ENCODE measurements at regions of chr9 and their contacts with region 1.

Region 1: DNA sequence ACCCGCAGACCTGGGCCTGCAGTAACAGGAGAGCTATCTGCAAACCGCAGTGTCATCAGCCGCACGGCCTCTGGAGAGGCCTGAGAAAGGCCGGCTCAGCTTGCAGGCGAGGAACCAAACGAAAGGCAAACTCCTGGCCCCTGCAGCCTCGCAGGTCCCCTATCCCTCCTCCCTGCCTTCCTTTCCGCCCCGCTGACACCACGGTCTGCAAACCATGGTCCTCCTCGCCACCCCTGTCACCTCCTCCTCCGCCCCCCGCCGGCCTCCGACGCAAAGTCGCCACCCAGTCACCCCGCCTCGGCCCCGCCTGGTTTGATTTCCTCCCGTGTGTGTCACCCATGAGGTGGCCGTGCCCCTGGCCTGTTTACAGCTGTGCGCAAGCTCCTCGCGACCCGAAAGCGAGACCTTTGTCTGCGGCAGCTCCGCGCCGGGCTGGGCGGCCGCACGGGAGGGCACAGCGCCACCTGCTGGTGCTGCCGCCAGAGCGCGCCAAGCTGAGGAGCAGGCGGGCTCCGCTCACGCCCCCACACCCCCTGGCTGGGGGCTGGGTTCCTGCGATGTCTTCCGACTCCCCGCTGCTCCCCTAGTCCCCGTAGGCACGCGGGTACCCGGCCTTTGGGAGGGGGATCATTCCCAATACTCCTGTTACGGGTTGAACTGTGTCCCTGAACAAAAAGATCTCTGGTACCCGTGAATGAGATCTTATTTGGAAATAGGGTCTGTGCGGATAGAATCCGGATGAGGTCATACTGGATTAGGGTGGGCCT is 19.4 kb downstream of the GBGT1 start:
- DNase-seq: peak; percentile 94
- ATAC-seq: peak; percentile 65
- H3K4me3 ChIP-seq: peak overlapping the region in 4 of 5 experiments; percentile 28 to 43 (median 38)
- H3K4me3 Mint-ChIP-seq: peak overlapping the region; percentile 84
- H3K27ac ChIP-seq: peak overlapping the region; percentile 64 to 67
- H3K27ac Mint-ChIP-seq: peak overlapping the region; percentile 86
- H3K4me1 ChIP-seq: peaks cover 29 to 56% of the 10 kb centered on the region in 2 donors
- H3K4me1 Mint-ChIP-seq: peaks cover 64% of the 10 kb centered on the region
- H3K27me3 ChIP-seq: no peaks in the 10 kb centered on the region
- H3K27me3 Mint-ChIP-seq: no peaks in the 10 kb centered on the region
- CTCF ChIP-seq: peak; percentile 98

Region 2: DNA sequence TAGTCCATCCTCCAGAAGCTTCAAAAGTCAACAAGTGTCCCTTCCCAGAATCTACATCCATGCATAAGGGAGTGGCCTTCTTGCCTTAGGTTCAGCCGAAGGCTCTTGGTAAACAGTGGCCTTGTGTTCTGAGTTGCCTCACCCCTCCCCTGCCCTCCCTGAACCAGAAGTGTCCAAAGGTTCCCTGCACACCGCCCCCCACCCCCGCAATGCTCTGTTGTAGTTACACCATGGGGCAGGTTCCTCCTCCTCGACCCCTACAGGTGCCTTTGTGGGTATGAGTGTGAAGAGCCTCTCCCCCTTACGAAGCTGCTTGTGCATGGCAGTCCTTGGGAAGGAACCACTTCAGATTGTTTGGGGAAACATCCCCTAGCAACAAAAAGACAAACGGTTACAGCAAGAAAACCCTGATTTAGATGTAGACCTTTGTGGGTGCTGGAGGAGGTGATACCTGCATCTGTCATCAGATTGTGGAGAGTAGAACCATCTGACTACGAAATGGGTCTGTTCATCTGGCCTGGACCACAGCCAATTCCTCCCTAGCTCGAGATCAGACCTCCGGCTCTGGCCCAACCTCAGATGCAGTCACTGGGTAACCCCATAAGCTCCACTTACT is 258.5 kb before region 1 on chr9:
- CTCF ChIA-PET with region 1: no interaction called
- POLR2A ChIA-PET with region 1: no interaction called
- intact Hi-C with region 1: loop called (anchors 2 kb)
- DNase-seq: peak; percentile 61
- ATAC-seq: no peak
- H3K4me3 ChIP-seq: no peak overlapping the region
- H3K4me3 Mint-ChIP-seq: no peak overlapping the region
- H3K27ac ChIP-seq: peak overlapping the region in 1 of 2 donors; percentile 45
- H3K27ac Mint-ChIP-seq: peak overlapping the region; percentile 80
- H3K4me1 ChIP-seq: peaks cover 42 to 50% of the 10 kb centered on the region in 2 donors
- H3K4me1 Mint-ChIP-seq: peaks cover 45% of the 10 kb centered on the region
- H3K27me3 ChIP-seq: no peaks in the 10 kb centered on the region
- H3K27me3 Mint-ChIP-seq: no peaks in the 10 kb centered on the region
- CTCF ChIP-seq: no peak

Region 3: DNA sequence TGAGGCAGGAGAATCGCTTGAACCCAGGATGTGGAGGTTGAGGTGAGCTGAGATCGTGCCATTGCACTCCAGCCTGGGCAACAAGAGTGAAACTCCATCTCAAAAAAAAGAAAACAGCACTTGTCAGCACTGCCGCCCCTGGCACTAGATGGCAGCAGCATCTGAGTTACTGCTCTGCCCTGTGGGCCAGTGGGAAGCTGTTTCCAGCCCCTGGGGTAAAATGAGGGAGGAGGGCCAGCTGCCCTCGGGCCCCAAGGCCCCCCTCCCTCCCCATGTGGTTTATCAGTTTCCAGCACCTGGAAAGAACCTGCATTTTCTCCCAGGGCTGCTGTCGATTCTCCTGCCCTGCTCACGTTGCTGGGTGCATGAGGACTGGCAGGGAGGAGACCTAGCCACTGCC is 95.8 kb before region 1 on chr9:
- CTCF ChIA-PET with region 1: interaction called, 6 read pairs
- POLR2A ChIA-PET with region 1: no interaction called
- intact Hi-C with region 1: loop called (anchors 1 kb)
- DNase-seq: no peak
- ATAC-seq: no peak
- H3K4me3 ChIP-seq: no peak overlapping the region
- H3K4me3 Mint-ChIP-seq: no peak overlapping the region
- H3K27ac ChIP-seq: no peak overlapping the region
- H3K27ac Mint-ChIP-seq: no peak overlapping the region
- H3K4me1 ChIP-seq: no peaks in the 10 kb centered on the region
- H3K4me1 Mint-ChIP-seq: no peaks in the 10 kb centered on the region
- H3K27me3 ChIP-seq: no peaks in the 10 kb centered on the region
- H3K27me3 Mint-ChIP-seq: no peaks in the 10 kb centered on the region
- CTCF ChIP-seq: no peak

Region 4: GRCh38 chr9:133115448-133116345 is 28.6 kb before region 1 on chr9:
- CTCF ChIA-PET with region 1: interaction called, 599 read pairs
- POLR2A ChIA-PET with region 1: interaction called, 21 read pairs
- intact Hi-C with region 1: loop called (anchors 1 kb)
- DNase-seq: peak; percentile 66
- ATAC-seq: peak; percentile 56
- H3K4me3 ChIP-seq: no peak overlapping the region
- H3K4me3 Mint-ChIP-seq: peak overlapping the region; percentile 67
- H3K27ac ChIP-seq: peak overlapping the region in 1 of 2 donors; percentile 57
- H3K27ac Mint-ChIP-seq: peak overlapping the region; percentile 85
- H3K4me1 ChIP-seq: peaks cover 55 to 68% of the 10 kb centered on the region in 2 donors
- H3K4me1 Mint-ChIP-seq: peaks cover 68% of the 10 kb centered on the region
- H3K27me3 ChIP-seq: no peaks in the 10 kb centered on the region
- H3K27me3 Mint-ChIP-seq: no peaks in the 10 kb centered on the region
- CTCF ChIP-seq: no peak

Region 5: GRCh38 chr9:133133681-133134418 is 10.5 kb before region 1 on chr9:
- CTCF ChIA-PET with region 1: interaction called, 87 read pairs
- POLR2A ChIA-PET with region 1: interaction called, 22 read pairs
- intact Hi-C with region 1: loop called (anchors 1 kb)
- DNase-seq: peak; percentile 87
- ATAC-seq: peak; percentile 82
- H3K4me3 ChIP-seq: no peak overlapping the region
- H3K4me3 Mint-ChIP-seq: peak overlapping the region; percentile 80
- H3K27ac ChIP-seq: peak overlapping the region; percentile 92 to 95
- H3K27ac Mint-ChIP-seq: peak overlapping the region; percentile 100
- H3K4me1 ChIP-seq: peaks cover 28 to 55% of the 10 kb centered on the region in 2 donors
- H3K4me1 Mint-ChIP-seq: peaks cover 55% of the 10 kb centered on the region
- H3K27me3 ChIP-seq: no peaks in the 10 kb centered on the region
- H3K27me3 Mint-ChIP-seq: no peaks in the 10 kb centered on the region
- CTCF ChIP-seq: no peak

Region 6: DNA sequence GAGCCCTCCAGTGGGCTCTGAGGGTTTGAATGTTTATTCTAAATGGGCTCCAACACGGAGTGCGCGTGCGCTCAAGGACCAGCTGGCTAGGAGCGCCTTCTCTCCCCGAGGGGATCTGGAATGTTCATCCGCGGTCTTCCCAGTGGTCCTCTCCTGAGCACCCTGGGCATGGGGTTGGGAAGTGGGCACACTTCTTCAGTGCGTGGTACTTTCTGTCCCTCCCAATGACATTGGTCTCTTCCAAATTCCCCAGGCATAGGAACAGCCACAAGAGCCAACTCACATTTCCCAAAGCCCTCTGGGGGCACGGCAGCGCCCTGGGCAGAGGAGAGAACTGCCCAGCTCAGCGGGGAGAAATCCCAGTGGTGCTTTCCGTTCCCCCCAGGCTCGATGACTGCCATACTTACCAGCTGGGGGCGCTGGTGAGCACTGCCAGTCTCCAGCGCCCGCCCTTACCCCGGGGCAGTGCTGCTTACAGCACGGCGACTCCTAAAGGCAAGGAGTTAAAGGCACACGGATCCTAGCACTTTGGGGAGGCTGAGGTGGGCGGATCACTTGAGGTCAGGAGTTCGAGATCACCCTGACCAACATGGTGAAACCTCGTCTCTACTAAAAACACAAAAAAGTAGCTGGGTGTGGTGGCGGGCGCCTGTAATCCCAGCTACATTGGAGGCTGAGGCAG is 94.7 kb after region 1 on chr9:
- CTCF ChIA-PET with region 1: no interaction called
- POLR2A ChIA-PET with region 1: no interaction called
- intact Hi-C with region 1: no loop called
- DNase-seq: peak; percentile 62
- ATAC-seq: peak; percentile 47
- H3K4me3 ChIP-seq: peak overlapping the region in 3 of 5 experiments; percentile 19 to 28 (median 25)
- H3K4me3 Mint-ChIP-seq: peak overlapping the region; percentile 49
- H3K27ac ChIP-seq: no peak overlapping the region
- H3K27ac Mint-ChIP-seq: no peak overlapping the region
- H3K4me1 ChIP-seq: peaks cover 9 to 10% of the 10 kb centered on the region in 2 donors
- H3K4me1 Mint-ChIP-seq: peaks cover 13% of the 10 kb centered on the region
- H3K27me3 ChIP-seq: peaks cover 0 to 30% (median 3%) of the 10 kb centered on the region in 4 experiments
- H3K27me3 Mint-ChIP-seq: peaks cover 31% of the 10 kb centered on the region
- CTCF ChIP-seq: peak; percentile 70

Measured in B cell (primary cell).